ENCODE measurements at regions of chr17 and their contacts with region 1.

Region 1: DNA sequence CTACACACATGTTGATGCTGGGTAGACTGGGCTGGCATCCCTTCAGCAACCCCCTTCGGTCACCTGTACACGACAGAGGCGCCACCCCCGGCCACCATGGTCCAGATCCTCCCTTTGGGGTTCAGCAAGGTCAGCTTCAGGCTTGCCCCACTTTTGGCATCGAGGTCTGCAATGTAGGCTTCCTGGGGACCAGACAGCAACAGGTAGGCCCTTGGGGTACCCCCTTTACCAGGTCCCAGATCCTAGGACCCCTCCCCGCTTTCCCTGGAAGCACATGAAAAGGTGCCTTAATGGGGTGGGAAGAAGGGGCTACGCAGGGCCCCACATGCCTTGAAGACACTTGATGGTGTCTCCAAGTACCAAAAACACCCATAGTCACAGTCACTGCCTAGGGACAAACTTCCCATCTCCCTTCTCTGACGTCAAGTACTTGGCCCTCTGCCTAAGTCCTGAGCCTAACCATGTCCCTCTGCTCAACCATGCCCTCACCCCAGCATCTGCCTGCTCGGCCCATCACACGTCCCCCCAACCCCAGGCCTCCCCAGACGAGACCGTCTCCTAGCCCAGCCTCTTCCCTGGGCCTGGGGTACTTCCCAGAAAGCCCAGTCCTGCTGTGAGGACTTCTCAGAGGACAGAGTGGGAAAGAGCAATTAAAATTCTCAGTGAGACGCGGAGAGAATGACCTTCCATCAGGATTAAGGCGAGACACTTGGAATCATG is 12.1 kb downstream of the ACLY start:
- DNase-seq: no peak
- H3K4me3 ChIP-seq: no peak overlapping the region
- H3K27me3 ChIP-seq: no peaks in the 10 kb centered on the region
- CTCF ChIP-seq: no peak

Region 2: DNA sequence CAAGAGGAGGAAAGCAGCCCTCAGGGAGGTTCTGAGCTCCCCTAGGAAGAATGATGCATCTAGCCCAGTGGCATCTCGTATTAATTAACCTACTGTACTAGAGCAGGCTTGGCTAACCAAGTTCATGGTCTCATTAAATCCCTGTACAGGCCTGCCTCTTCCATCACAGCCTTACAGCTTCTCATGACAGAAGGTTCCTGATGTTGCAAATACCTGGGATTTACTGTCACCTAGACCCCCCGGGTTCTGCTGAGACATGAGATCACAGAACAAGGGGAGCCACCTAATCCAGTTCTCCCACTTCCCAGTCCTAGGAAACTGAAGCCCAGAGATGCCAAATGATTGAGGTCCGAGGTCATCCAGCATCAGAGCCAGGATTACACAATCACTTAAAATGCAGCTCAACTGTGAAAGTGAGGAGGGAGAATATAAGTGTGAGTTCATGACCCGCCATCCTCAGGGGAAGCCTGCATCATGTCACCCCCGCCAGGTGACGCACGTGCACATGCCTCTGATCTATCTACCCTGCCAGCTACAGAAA is 11.8 kb before region 1 on chr17:
- CTCF ChIA-PET with region 1: interaction called, 12 read pairs
- POLR2A ChIA-PET with region 1: no interaction called
- DNase-seq: peak; percentile 82
- H3K4me3 ChIP-seq: no peak overlapping the region
- H3K27me3 ChIP-seq: no peaks in the 10 kb centered on the region
- CTCF ChIP-seq: no peak

Measured in BJ (cell line).